Head of caudate nucleus (tissue), 42 donors: ENCODE measurements at regions of chr11 and their contacts with region 1.

Region 1: DNA sequence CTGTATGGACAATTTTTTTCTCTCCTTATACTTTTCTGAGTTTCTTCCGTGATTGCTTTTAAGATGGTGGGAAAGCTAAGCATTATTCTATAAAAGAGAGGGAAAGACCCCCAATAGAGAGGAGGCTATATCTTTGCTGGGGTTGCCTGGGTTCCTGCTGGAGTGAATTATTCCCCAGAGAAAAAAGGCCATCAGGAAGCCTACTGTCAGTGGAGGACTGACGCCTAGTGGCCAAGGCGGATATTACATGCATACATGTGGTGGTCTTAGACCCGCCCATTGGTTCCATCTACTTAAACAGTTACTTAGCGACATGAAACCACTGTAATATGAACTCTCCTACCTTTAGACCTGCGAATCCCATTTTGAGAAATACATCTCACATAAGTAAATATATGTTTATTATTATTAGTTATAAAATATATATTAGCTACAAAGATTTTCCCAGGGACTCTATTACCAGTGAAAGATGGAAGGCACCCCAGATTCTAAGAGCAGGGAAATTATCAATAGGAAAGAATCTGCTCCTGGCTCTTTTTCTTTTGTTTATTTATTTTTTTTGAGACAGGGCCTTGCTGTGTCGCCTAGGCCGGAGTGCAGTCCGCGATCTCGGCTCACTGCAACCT is 15.7 kb upstream of the PGA3 start:
- DNase-seq: peak in 41 of 42 donors; percentile 48 to 92 (median 77)

Region 2: GRCh38 chr11:60831143-60831500 is 356.5 kb before region 1 on chr11:
- intact Hi-C with region 1: loop called (anchors 10 kb)
- DNase-seq: peak; percentile 67 to 95 (median 88)

Region 3: DNA sequence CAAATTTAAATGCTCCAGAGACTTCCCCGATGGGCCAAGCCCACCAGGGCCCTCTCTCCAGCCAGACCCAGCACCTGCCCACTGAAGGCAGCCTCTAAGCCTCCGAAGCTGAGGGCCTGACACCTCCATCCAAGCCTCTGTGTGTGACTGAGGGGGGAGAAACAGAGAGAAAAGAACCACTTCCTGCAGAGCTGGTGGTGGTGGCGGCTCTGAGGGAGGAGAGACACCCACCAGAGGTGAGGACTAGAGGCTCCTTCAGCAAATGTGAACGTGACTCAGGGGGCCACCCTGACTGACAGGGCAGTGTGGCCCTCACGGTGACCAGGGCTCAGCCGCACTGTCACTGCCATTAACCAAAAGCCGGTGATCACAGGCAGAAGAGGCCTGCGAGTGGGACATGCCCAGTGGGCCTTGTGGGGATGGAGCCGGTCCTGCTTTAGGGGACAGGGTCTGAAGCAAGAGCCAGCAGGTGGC is 116.4 kb before region 1 on chr11:
- intact Hi-C with region 1: no loop called
- DNase-seq: no peak

Region 4: GRCh38 chr11:61111786-61112517 is 75.7 kb before region 1 on chr11:
- intact Hi-C with region 1: loop called (anchors 10 kb)
- DNase-seq: peak in 1 of 42 donors; percentile 1